Activated CD4-positive, alpha-beta T cell treated with anti-CD3 and anti-CD28 coated beads, Interleukin-2, amount 10 ng/mL, durations not matched to agents 24 days and 14 days (primary cell): ENCODE measurements at regions of chr6 and their contacts with region 1.

Region 1: DNA sequence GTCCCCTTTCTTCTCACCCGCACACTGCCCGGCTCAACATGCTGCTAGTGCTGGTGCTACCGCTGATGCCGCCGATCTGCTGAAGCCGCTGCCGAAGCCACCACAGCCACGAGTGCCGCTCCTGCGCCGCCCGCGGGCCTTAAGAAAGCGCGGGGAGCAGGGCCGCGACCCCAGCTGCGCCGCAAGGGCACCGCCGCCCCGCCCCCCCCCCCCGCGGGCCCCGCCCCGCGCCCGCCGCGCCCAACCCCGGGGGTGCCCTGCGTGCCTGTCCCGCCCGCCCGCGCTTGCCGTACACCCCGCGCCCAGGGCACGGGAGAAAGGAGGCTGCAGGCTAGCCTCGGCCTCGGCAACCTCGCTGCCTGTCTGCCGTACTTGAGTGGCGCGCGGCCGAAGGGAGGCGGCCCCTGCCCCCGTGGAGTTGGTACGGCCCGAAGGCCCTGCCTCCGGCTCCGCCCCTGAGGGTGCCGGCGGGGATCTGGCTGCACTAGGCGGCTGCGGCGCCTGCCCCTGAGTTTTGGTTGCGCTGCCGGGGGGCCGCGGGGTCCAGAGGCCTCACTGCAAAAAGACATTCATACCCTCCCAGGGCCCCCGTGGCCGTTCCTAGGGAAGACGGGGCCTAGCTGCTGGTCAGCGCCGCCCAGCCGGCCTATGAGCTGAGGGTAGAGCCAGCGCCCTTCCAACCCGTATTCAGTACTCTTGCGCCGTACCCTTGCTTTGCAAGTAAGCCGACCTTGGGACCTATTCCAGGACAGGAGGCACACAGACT is at the start of gene SOD2:
- DNase-seq: peak; percentile 95
- H3K4me3 Mint-ChIP-seq: peak within 1 kb of the TSS; percentile 84
- H3K27ac Mint-ChIP-seq: peak within 1 kb of the TSS; percentile 96
- H3K4me1 Mint-ChIP-seq: peaks cover 46% of the 10 kb centered on the region
- H3K27me3 Mint-ChIP-seq: no peaks in the 10 kb centered on the region
- total RNA-seq, gene SOD2: 83.0 and 88.3 TPM in 2 replicates

Region 2: DNA sequence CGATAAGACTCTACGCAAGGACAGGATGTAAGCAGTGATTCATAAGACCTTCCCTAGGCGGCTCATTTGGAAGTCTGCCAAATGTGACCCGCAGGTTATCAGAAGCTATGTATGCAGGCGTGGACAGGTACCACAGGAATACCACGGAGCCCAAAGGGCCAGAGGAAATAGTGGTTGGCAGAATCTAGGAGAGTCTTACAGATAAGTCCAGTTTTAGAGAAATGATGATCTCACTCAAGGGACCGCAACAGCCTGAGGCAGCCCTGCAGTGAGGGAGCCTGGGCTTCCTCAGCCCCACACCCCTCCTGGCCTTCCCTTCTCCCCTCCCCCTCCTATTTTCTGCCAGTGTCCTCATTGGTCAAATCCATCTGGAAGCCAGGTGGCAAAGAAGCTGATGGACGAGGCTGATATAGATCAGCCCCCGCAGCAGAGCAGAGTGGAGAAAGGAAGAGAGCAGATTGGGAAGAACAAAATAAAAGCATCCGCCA is 413.5 kb before region 1 on chr6:
- intact Hi-C with region 1: no loop called
- DNase-seq: no peak
- H3K4me3 Mint-ChIP-seq: no peak overlapping the region
- H3K27ac Mint-ChIP-seq: no peak overlapping the region
- H3K4me1 Mint-ChIP-seq: no peaks in the 10 kb centered on the region
- H3K27me3 Mint-ChIP-seq: no peaks in the 10 kb centered on the region

Region 3: GRCh38 chr6:159679091-159680077 is 13.9 kb before region 1 on chr6:
- intact Hi-C with region 1: no loop called
- DNase-seq: no peak
- H3K4me3 Mint-ChIP-seq: peak overlapping the region; percentile 5
- H3K27ac Mint-ChIP-seq: peak overlapping the region; percentile 84
- H3K4me1 Mint-ChIP-seq: peaks cover 18% of the 10 kb centered on the region
- H3K27me3 Mint-ChIP-seq: peaks cover 1% of the 10 kb centered on the region

Region 4: DNA sequence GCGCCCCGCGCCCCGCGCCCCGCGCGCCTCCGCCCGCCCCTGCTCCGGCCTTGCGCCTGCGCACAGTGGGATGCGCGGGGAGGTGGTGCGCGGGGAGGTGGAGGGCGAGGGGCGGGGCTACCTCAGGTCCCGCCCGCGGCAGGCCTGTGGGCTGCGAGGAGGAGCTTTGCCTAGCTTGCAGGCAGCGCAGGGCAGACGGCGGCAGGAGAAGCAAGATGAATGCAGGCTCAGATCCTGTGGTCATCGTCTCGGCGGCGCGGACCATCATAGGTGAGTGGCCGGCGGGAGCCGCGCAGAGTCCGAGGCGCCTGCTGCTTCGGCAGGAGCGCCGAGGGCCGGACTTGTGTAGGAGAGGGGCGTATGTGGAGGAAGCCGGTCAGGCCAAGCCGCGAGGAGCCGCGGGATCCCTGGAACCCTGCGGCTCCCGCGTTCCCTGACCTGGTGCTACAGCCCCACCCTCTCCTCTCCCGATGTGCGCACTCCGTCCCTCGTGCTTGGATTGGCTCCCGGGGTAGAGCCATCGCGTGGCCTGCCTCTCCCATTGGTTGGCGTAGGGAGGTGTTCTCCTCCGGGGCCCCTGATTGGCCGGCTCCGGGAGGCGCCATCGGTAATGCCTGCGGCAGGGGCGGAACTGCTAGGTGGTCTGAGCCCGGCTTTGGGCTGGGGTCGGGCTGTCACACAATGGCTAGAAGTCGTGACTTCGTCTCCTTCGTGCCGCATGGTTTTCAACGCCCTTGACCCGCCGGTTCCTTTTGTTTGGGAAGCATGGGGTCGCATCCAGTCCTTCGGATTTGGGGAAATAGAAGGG is 68.8 kb after region 1 on chr6 and contains the start of gene ACAT2:
- intact Hi-C with region 1: loop called (anchors 1 kb)
- DNase-seq: peak; percentile 98
- H3K4me3 Mint-ChIP-seq: peak within 1 kb of the TSS; percentile 94
- H3K27ac Mint-ChIP-seq: peak within 1 kb of the TSS; percentile 98
- H3K4me1 Mint-ChIP-seq: peaks cover 42% of the 10 kb centered on the region
- H3K27me3 Mint-ChIP-seq: no peaks in the 10 kb centered on the region
- total RNA-seq, gene ACAT2: 85.3 and 88.2 TPM in 2 replicates

Region 5: DNA sequence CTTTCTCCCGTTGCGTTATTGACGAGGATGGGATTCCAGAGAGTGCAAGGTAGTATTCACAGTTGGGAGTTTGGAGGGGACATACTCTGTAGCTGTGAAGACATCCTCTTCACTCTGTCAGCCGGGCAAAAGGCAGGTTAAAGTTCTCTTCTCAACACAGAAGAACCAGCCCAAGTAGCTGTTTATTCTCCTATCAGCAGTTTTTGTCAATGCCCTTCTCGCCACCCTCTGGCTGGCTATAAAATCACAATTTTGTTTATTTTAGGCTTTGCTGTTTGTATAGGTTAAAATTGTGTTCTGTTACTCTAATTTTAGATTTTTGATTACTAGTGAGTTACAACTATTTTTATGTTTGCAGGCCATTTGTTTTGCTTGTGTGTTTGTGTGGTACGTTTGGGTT is 159.6 kb after region 1 on chr6:
- intact Hi-C with region 1: loop called (anchors 5 kb)
- DNase-seq: peak; percentile 72
- H3K4me3 Mint-ChIP-seq: no peak overlapping the region
- H3K27ac Mint-ChIP-seq: no peak overlapping the region
- H3K4me1 Mint-ChIP-seq: no peaks in the 10 kb centered on the region
- H3K27me3 Mint-ChIP-seq: peaks cover 33% of the 10 kb centered on the region

Region 6: DNA sequence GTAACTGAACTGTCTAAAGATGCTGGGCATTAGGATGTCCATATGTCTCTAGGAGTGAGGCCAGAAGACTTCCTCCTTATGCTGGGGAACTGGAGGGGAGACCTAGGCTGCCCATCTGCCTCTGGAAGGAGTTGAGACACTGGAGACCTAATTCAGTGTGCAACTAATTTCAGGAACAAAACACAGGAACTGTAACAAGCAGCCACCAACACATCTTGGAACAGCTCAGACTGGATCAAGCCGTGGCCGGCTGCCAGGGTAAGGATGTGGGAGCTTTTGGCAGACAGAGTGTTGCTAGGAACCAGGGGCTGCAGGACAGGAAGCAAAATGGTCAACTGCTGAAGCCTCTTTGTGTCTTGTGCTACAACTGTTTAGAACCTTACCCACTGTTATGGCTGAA is 181.1 kb after region 1 on chr6:
- intact Hi-C with region 1: no loop called
- DNase-seq: no peak
- H3K4me3 Mint-ChIP-seq: no peak overlapping the region
- H3K27ac Mint-ChIP-seq: no peak overlapping the region
- H3K4me1 Mint-ChIP-seq: peaks cover 5% of the 10 kb centered on the region
- H3K27me3 Mint-ChIP-seq: no peaks in the 10 kb centered on the region

Region 7: GRCh38 chr6:159968440-159969203 is 275.3 kb after region 1 on chr6 and contains the start of gene IGF2R:
- intact Hi-C with region 1: loop called (anchors 2 kb)
- DNase-seq: peak; percentile 98
- H3K4me3 Mint-ChIP-seq: peak within 1 kb of the TSS; percentile 88
- H3K27ac Mint-ChIP-seq: peak within 1 kb of the TSS; percentile 91
- H3K4me1 Mint-ChIP-seq: peaks cover 37% of the 10 kb centered on the region
- H3K27me3 Mint-ChIP-seq: peaks cover 23% of the 10 kb centered on the region
- total RNA-seq, gene IGF2R: 75.1 and 77.9 TPM in 2 replicates

Region 8: GRCh38 chr6:160462551-160463109 is 769.3 kb after region 1 on chr6:
- intact Hi-C with region 1: loop called (anchors 2 kb)
- DNase-seq: peak; percentile 94
- H3K4me3 Mint-ChIP-seq: peak overlapping the region; percentile 72
- H3K27ac Mint-ChIP-seq: peak overlapping the region; percentile 74
- H3K4me1 Mint-ChIP-seq: peaks cover 56% of the 10 kb centered on the region
- H3K27me3 Mint-ChIP-seq: peaks cover 27% of the 10 kb centered on the region